SK-N-SH (cell line): ENCODE measurements at regions of chr6 and their contacts with region 1.

Region 1: DNA sequence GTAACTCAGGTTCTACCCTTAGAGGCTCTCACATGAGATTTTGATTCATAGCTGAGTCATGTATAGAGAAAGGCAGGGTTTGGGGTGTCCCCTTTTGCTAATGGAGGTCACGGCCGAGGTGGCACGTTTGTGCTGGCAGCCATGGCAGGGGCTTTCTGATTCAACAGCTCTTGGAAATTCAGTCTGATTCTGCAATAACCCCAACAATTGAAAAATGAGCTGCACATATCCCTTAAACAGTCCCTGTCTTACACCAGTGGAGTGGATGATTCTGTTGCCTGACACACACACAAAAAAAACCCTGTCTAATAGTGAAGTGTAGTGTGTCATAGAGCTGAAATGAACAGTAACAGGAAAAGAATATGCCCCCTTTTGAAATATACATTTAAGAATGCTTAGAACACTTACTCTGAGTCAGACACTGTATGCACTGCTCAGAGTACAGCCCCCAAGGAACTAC is 40.4 kb upstream of the ARG1 start:
- DNase-seq: no peak
- H3K4me3 ChIP-seq: no peak overlapping the region
- H3K27ac ChIP-seq: no peak overlapping the region
- H3K4me1 ChIP-seq: peaks cover 0 to 3% of the 10 kb centered on the region in 2 experiments; a peak in 1 of 4 replicates
- H3K27me3 ChIP-seq: peaks cover 12% of the 10 kb centered on the region
- CTCF ChIP-seq: no peak
- EP300 ChIP-seq: no peak
- RAD21 ChIP-seq: no peak

Region 2: GRCh38 chr6:131063028-131063763 is 469.4 kb before region 1 on chr6 and contains the start of gene EPB41L2:
- CTCF ChIA-PET with region 1: no interaction called
- POLR2A ChIA-PET with region 1: no interaction called
- DNase-seq: peak; percentile 69
- H3K4me3 ChIP-seq: peak within 1 kb of the TSS; percentile 48 to 69
- H3K27ac ChIP-seq: no peak within 1 kb of the TSS
- H3K4me1 ChIP-seq: peaks cover 0 to 5% of the 10 kb centered on the region in 2 experiments; a peak in 1 of 4 replicates
- H3K27me3 ChIP-seq: peaks cover 49% of the 10 kb centered on the region; the same call in 1 of the 2 replicates
- CTCF ChIP-seq: peak; percentile 13
- EP300 ChIP-seq: no peak
- RAD21 ChIP-seq: no peak
- polyA plus RNA-seq, gene EPB41L2: 1.4 and 1.9 TPM in 2 replicates

Region 3: DNA sequence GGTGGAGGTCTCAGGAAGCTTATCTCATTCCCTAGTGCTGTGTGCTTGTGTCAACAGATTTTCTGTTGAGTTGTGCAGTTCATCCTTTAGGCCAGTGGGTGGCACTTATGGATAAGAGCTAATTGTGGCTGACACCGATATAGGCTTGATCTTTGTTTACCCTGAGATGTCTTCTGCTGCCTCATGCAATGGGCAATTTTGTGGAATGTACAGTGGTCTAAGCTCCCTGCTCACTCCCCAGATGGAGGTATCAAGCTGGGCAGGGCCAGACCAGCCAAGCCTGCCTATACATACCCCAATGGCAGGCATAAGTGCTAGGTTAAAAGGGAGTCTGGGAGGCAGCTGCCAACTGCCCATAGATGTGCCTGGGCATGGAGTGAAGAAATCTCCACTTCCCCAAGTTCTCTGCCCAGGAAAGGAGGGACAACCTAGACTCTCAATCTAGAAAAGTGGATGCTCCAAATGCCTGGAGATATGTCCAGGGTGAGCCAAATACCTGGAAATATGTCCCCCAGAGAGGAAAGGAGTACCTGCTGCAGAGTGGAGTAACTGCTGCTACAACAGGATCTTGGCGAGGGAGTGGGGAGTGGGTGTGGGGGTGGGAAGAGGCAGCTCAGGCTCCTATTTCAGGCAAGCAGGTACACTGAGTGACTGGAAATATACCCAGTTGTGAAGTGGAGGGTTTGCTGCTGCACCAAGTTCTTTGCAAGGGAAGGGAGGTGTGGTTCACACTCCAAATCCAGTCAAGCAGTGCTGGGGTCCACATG is 12.8 kb before region 1 on chr6:
- CTCF ChIA-PET with region 1: interaction called, 36 read pairs
- POLR2A ChIA-PET with region 1: no interaction called
- DNase-seq: peak; percentile 21
- H3K4me3 ChIP-seq: no peak overlapping the region
- H3K27ac ChIP-seq: no peak overlapping the region
- H3K4me1 ChIP-seq: no peaks in the 10 kb centered on the region
- H3K27me3 ChIP-seq: no peaks in the 10 kb centered on the region
- CTCF ChIP-seq: peak; percentile 59
- EP300 ChIP-seq: no peak
- RAD21 ChIP-seq: peak; percentile 63

Region 4: DNA sequence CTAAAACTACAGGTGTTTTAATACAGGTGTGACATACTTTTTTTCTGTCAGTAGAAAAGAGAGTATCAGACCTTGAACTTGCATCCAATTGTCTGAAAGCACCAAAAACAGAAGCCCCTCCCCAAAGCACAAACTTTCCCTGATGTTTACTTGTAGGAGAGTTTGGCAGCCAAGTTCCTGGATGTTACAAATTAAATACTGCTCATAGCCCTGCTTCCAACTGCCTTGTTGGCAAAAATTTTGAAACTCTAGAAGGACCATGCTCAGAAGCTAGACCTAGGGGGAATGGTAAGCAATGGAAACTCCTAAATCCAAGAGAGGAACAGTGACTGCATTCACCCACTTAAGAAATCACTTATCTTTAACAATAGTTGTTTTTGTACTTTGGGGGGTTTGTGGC is 23.4 kb after region 1 on chr6:
- CTCF ChIA-PET with region 1: interaction called, 10 read pairs
- POLR2A ChIA-PET with region 1: no interaction called
- DNase-seq: no peak
- H3K4me3 ChIP-seq: no peak overlapping the region
- H3K27ac ChIP-seq: no peak overlapping the region
- H3K4me1 ChIP-seq: no peaks in the 10 kb centered on the region
- H3K27me3 ChIP-seq: peaks cover 8% of the 10 kb centered on the region; the same call in 1 of the 2 replicates
- CTCF ChIP-seq: no peak
- EP300 ChIP-seq: no peak
- RAD21 ChIP-seq: no peak

Region 5: GRCh38 chr6:132084833-132085509 is 552.4 kb after region 1 on chr6:
- CTCF ChIA-PET with region 1: no interaction called
- POLR2A ChIA-PET with region 1: no interaction called
- DNase-seq: no peak
- H3K4me3 ChIP-seq: peak overlapping the region; percentile 32 to 49; a peak in 3 of 4 replicates
- H3K27ac ChIP-seq: peak overlapping the region; percentile 88 to 100
- H3K4me1 ChIP-seq: peaks cover 0 to 42% of the 10 kb centered on the region in 2 experiments; a peak in 2 of 4 replicates
- H3K27me3 ChIP-seq: no peaks in the 10 kb centered on the region
- CTCF ChIP-seq: no peak; the same call in 1 of the 2 replicates
- EP300 ChIP-seq: peak; percentile 42 to 98; a peak in 3 of 4 replicates
- RAD21 ChIP-seq: no peak

Region 6: GRCh38 chr6:132391391-132392271 is 859.0 kb after region 1 on chr6:
- CTCF ChIA-PET with region 1: no interaction called
- POLR2A ChIA-PET with region 1: no interaction called
- DNase-seq: no peak
- H3K4me3 ChIP-seq: peak overlapping the region in 1 of 2 experiments; percentile 14; a peak in 1 of 4 replicates
- H3K27ac ChIP-seq: peak overlapping the region; percentile 82 to 90
- H3K4me1 ChIP-seq: no peaks in the 10 kb centered on the region; a peak in 1 of 4 replicates
- H3K27me3 ChIP-seq: no peaks in the 10 kb centered on the region
- CTCF ChIP-seq: no peak
- EP300 ChIP-seq: peak in 1 of 2 experiments; percentile 57; a peak in 1 of 4 replicates
- RAD21 ChIP-seq: no peak

Region 7: GRCh38 chr6:133314947-133315346 is 1782.3 kb after region 1 on chr6:
- CTCF ChIA-PET with region 1: no interaction called
- POLR2A ChIA-PET with region 1: no interaction called
- DNase-seq: no peak
- H3K4me3 ChIP-seq: no peak overlapping the region
- H3K27ac ChIP-seq: no peak overlapping the region
- H3K4me1 ChIP-seq: no peaks in the 10 kb centered on the region
- H3K27me3 ChIP-seq: no peaks in the 10 kb centered on the region
- CTCF ChIP-seq: no peak
- EP300 ChIP-seq: no peak
- RAD21 ChIP-seq: no peak